ENCODE measurements at regions of chr4 and their contacts with region 1.

Region 1: GRCh38 chr4:186326391-186326790 is 60.4 kb downstream of the F11 start:
- DNase-seq: no peak
- ATAC-seq: no peak
- H3K4me3 ChIP-seq: no peak overlapping the region
- H3K27ac ChIP-seq: no peak overlapping the region
- H3K4me1 ChIP-seq: peaks cover 0 to 3% of the 10 kb centered on the region in 2 experiments; a peak in 1 of 5 replicates
- H3K27me3 ChIP-seq: peaks cover 7 to 26% of the 10 kb centered on the region in 2 experiments
- CTCF ChIP-seq: no peak
- EP300 ChIP-seq: no peak
- POLR2A ChIP-seq: no peak
- RAD21 ChIP-seq: no peak

Region 2: GRCh38 chr4:184994010-184994622 is 1332.3 kb before region 1 on chr4:
- CTCF ChIA-PET with region 1: no interaction called
- POLR2A ChIA-PET with region 1: no interaction called
- in situ Hi-C with region 1: loop called (anchors 10 kb)
- intact Hi-C with region 1: no loop called
- DNase-seq: no peak
- ATAC-seq: no peak
- H3K4me3 ChIP-seq: no peak overlapping the region
- H3K27ac ChIP-seq: no peak overlapping the region
- H3K4me1 ChIP-seq: no peaks in the 10 kb centered on the region
- H3K27me3 ChIP-seq: peaks cover 25 to 37% of the 10 kb centered on the region in 2 experiments
- CTCF ChIP-seq: no peak
- EP300 ChIP-seq: no peak
- POLR2A ChIP-seq: no peak
- RAD21 ChIP-seq: no peak

Region 3: GRCh38 chr4:187504974-187505797 is 1178.8 kb after region 1 on chr4:
- CTCF ChIA-PET with region 1: no interaction called
- POLR2A ChIA-PET with region 1: no interaction called
- in situ Hi-C with region 1: no loop called
- intact Hi-C with region 1: loop called (anchors 5 kb)
- DNase-seq: peak in 1 of 4 experiments; percentile 3
- ATAC-seq: peak; percentile 53
- H3K4me3 ChIP-seq: no peak overlapping the region
- H3K27ac ChIP-seq: no peak overlapping the region
- H3K4me1 ChIP-seq: no peaks in the 10 kb centered on the region
- H3K27me3 ChIP-seq: no peaks in the 10 kb centered on the region
- CTCF ChIP-seq: no peak
- EP300 ChIP-seq: no peak
- POLR2A ChIP-seq: no peak
- RAD21 ChIP-seq: no peak

Measured in K562 (cell line).